Ovary (tissue), 10 donors: ENCODE measurements at regions of chr19 and their contacts with region 1.

Region 1: GRCh38 chr19:48872182-48872883 is at the start of gene PPP1R15A:
- DNase-seq: peak; percentile 98 to 100 (median 99)
- H3K4me3 ChIP-seq: peak within 1 kb of the TSS; percentile 97
- H3K27ac ChIP-seq: peak within 1 kb of the TSS; percentile 99
- H3K4me1 ChIP-seq: peaks cover 17% of the 10 kb centered on the region
- H3K27me3 ChIP-seq: no peaks in the 10 kb centered on the region
- CTCF ChIP-seq: peak in 2 of 3 donors; percentile 67 to 90
- EP300 ChIP-seq: peak; percentile 75
- POLR2A ChIP-seq: peak; percentile 100
- total RNA-seq, gene PPP1R15A: 22.8 to 156 (median 40.1) TPM

Region 2: GRCh38 chr19:48819366-48819816 is 52.9 kb before region 1 on chr19:
- intact Hi-C with region 1: no loop called
- DNase-seq: peak; percentile 85 to 92 (median 89)
- H3K4me3 ChIP-seq: no peak overlapping the region
- H3K27ac ChIP-seq: peak overlapping the region; percentile 36 to 47
- H3K4me1 ChIP-seq: peaks cover 14% of the 10 kb centered on the region
- H3K27me3 ChIP-seq: no peaks in the 10 kb centered on the region
- CTCF ChIP-seq: no peak
- EP300 ChIP-seq: no peak
- POLR2A ChIP-seq: no peak

Region 3: DNA sequence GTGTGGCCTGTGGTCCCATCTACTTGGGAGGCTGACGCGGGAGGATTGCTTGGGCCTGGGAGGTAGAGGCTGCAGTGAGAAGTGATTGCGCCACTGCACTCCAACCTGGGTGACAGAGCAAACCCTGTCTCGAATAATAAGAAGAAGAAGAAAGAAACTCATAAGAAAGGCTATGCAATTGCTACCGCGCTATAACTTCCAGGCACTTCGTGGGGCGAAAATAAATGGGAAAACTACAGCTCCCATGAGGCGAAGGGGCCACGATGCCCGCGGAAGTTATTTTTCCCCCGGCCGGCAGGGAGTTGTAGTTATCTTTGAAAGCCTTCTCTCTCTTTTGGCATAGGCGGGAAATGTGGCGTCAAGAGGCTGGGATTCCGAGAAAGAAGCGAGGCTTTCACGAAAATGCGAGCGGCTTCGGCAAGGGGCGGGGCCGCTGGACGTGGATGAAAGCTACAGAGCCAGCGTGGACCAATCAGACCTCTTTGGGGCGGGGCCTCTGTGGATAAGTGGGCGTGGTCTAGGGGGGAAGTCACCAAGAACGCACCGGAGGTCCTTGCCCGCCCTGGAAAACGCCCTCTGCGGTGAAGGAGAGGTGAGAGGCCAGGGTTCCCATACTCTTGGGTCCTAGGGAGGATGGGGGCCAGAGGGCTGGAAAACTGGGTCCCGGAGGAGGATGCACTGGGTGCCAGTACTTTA is 27.6 kb after region 1 on chr19 and contains the start of gene NUCB1:
- intact Hi-C with region 1: loop called in 1 of 4 experiments (anchors 2 kb)
- DNase-seq: peak; percentile 99 to 100 (median 99)
- H3K4me3 ChIP-seq: peak within 1 kb of the TSS; percentile 89
- H3K27ac ChIP-seq: peak within 1 kb of the TSS; percentile 87 to 96
- H3K4me1 ChIP-seq: peaks cover 1% of the 10 kb centered on the region
- H3K27me3 ChIP-seq: no peaks in the 10 kb centered on the region
- CTCF ChIP-seq: peak in 2 of 3 donors; percentile 48 to 51
- EP300 ChIP-seq: peak; percentile 98
- POLR2A ChIP-seq: peak; percentile 86
- total RNA-seq, gene NUCB1: 128 to 249 (median 189) TPM